A673 (cell line): ENCODE measurements at regions of chr5 and their contacts with region 1.

Region 1: GRCh38 chr5:136249678-136250266 is 56.8 kb upstream of the SMIM32 start:
- DNase-seq: peak; percentile 70
- H3K4me3 ChIP-seq: no peak overlapping the region
- H3K27ac ChIP-seq: no peak overlapping the region
- H3K4me1 ChIP-seq: no peaks in the 10 kb centered on the region
- H3K27me3 ChIP-seq: peaks cover 69% of the 10 kb centered on the region
- CTCF ChIP-seq: peak; percentile 95

Region 2: GRCh38 chr5:136396886-136397285 is 147.1 kb after region 1 on chr5:
- CTCF ChIA-PET with region 1: no interaction called
- POLR2A ChIA-PET with region 1: no interaction called
- intact Hi-C with region 1: no loop called
- DNase-seq: no peak
- H3K4me3 ChIP-seq: no peak overlapping the region
- H3K27ac ChIP-seq: no peak overlapping the region
- H3K4me1 ChIP-seq: no peaks in the 10 kb centered on the region
- H3K27me3 ChIP-seq: peaks cover 87% of the 10 kb centered on the region
- CTCF ChIP-seq: no peak

Region 3: GRCh38 chr5:136424835-136425584 is 175.2 kb after region 1 on chr5:
- CTCF ChIA-PET with region 1: no interaction called
- POLR2A ChIA-PET with region 1: no interaction called
- intact Hi-C with region 1: loop called (anchors 1 kb)
- DNase-seq: peak; percentile 81
- H3K4me3 ChIP-seq: no peak overlapping the region
- H3K27ac ChIP-seq: no peak overlapping the region
- H3K4me1 ChIP-seq: no peaks in the 10 kb centered on the region
- H3K27me3 ChIP-seq: peaks cover 48% of the 10 kb centered on the region
- CTCF ChIP-seq: peak; percentile 94

Region 4: GRCh38 chr5:136682986-136683385 is 433.2 kb after region 1 on chr5:
- CTCF ChIA-PET with region 1: interaction called, 7 read pairs
- POLR2A ChIA-PET with region 1: no interaction called
- intact Hi-C with region 1: loop called (anchors 5 kb)
- DNase-seq: no peak
- H3K4me3 ChIP-seq: no peak overlapping the region
- H3K27ac ChIP-seq: no peak overlapping the region
- H3K4me1 ChIP-seq: no peaks in the 10 kb centered on the region
- H3K27me3 ChIP-seq: no peaks in the 10 kb centered on the region
- CTCF ChIP-seq: no peak

Region 5: GRCh38 chr5:136769900-136770684 is 520.3 kb after region 1 on chr5:
- CTCF ChIA-PET with region 1: interaction called, 7 read pairs
- POLR2A ChIA-PET with region 1: no interaction called
- intact Hi-C with region 1: loop called (anchors 1 kb)
- DNase-seq: peak; percentile 73
- H3K4me3 ChIP-seq: no peak overlapping the region
- H3K27ac ChIP-seq: no peak overlapping the region
- H3K4me1 ChIP-seq: no peaks in the 10 kb centered on the region
- H3K27me3 ChIP-seq: peaks cover 30% of the 10 kb centered on the region
- CTCF ChIP-seq: peak; percentile 87